BJ (cell line): ENCODE measurements at regions of chr16 and their contacts with region 1.

Region 1: DNA sequence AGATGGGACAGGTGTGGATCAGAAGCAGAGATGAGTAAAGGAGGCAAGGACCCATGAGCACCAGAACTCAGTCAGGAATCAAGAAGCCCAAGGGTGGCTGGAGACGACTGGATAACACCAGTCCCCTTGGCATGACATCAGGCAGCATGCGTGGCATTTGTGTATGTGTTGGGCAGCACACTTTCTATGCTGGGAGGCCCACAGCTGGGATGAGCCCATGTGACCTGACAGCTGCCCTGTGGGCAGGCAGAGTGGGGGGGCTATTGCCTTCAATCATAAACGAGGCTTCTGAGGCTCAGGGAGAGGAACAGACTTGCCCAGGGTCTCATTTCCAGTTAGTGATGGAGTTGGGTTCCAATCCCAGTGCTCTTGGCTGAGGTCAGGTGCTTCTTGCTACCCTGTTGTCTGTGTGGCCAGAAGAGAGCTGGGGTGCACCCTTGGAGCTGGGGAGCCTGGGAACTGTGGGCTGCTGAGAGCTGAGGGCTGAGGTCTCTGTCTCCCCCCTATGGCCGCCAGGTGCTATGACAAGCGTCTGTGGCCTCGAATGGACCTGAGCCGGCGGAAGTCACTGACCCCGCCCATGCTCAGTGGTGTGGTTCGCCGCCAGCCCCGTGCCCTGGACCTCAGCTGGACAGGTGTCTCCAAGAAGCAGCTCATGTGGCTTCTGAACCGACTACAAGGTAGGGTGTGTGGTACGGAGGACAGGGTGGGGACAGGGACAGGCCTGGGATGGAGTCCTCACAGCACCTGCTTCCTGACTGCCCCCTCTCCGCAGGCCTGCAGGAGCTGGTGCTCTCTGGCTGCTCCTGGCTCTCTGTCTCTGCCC is 7.1 kb upstream of the ORAI3 start:
- DNase-seq: no peak
- H3K4me3 ChIP-seq: no peak overlapping the region
- H3K27me3 ChIP-seq: no peaks in the 10 kb centered on the region
- CTCF ChIP-seq: peak; percentile 96

Region 2: DNA sequence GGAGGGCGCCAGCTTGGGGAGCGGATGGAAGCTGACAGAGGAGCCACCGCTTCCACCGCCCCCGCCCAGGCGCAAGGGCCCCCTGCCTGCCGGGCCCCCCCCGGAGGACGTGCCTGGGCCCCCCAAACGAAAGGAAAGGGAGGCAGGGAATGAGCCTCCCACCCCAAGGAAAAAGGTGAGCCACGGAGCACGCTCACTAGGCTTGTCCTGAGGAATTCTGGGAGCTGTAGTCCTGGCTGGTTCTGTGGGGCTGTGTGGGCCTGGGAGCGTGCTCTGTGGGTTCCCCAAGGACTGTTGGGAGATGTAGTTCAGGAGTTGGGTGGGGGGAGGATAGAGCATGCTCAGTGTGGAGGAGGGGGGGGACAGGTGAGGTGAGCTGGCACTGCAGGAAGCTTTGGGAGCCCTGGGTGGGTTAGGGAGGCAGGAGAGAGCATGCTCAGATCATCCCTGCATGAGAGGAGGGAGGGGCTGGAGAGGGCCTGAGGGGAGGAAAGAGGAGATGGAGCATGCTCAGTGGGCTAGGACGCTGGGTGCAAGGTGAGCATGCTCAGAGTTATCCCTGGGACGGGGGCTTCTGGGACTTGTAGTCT is 13.9 kb before region 1 on chr16:
- CTCF ChIA-PET with region 1: interaction called, 40 read pairs
- POLR2A ChIA-PET with region 1: interaction called, 7 read pairs
- DNase-seq: no peak
- H3K4me3 ChIP-seq: no peak overlapping the region
- H3K27me3 ChIP-seq: no peaks in the 10 kb centered on the region
- CTCF ChIP-seq: no peak

Region 3: GRCh38 chr16:30953511-30954124 is 11.8 kb after region 1 on chr16:
- CTCF ChIA-PET with region 1: interaction called, 30 read pairs
- POLR2A ChIA-PET with region 1: no interaction called
- DNase-seq: no peak
- H3K4me3 ChIP-seq: no peak overlapping the region
- H3K27me3 ChIP-seq: no peaks in the 10 kb centered on the region
- CTCF ChIP-seq: peak; percentile 75